CD8-positive, alpha-beta T cell (primary cell): ENCODE measurements at regions of chr12 and their contacts with region 1.

Region 1: DNA sequence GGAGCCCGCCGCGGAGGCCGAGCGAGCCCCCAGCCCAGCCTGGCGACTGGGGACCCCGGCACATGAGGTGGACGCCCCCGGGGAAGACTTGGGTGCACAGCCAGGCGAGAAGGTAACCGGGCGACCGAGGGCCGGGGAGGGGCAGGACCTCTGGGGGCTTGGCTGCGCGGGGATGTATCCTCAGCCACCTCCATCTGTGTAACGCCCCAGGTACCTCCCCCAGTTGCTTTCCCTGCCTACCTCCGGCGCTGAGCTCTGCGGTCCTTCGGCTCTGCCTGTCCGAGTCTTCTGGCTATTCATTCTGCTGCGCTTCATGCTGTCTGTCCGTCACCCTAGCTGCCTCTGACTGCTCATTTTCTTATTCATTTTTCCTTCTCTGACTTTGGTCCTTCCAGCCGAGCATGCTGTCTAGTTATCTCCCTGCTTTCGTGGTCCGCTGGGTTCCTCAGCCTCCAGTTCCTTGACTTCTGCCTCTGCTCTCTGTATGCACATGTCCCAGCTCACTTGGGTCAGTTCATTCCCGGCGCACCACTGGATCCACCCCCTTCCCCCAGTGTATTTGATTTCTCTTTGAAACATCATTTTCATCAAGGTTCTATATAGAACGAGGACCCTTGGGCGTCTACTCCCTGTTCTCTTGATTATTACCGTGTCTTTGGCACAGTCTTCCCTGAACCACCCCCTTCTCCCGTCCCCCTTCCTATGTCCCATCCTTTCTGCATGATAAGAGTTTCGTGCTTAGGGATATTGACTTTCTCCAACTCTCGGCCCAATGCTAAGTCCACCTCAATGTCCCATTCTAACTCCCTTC is 612 bp downstream of the PHC1 start:
- DNase-seq: peak; percentile 26 to 81 (median 60)
- ATAC-seq: peak; percentile 81
- H3K4me3 ChIP-seq: peak overlapping the region; percentile 79 to 82
- H3K4me3 Mint-ChIP-seq: no peak overlapping the region
- H3K27ac ChIP-seq: peak overlapping the region; percentile 44 to 61
- H3K27ac Mint-ChIP-seq: no peak overlapping the region
- H3K4me1 ChIP-seq: peaks cover 23% of the 10 kb centered on the region
- H3K4me1 Mint-ChIP-seq: peaks cover 13% of the 10 kb centered on the region
- H3K27me3 ChIP-seq: no peaks in the 10 kb centered on the region
- H3K27me3 Mint-ChIP-seq: no peaks in the 10 kb centered on the region
- CTCF ChIP-seq: no peak

Region 2: GRCh38 chr12:8629486-8630033 is 285.4 kb before region 1 on chr12:
- CTCF ChIA-PET with region 1: no interaction called
- POLR2A ChIA-PET with region 1: no interaction called
- intact Hi-C with region 1: no loop called
- DNase-seq: peak in 1 of 9 experiments; percentile 7
- ATAC-seq: no peak
- H3K4me3 ChIP-seq: no peak overlapping the region
- H3K4me3 Mint-ChIP-seq: no peak overlapping the region
- H3K27ac ChIP-seq: no peak overlapping the region
- H3K27ac Mint-ChIP-seq: no peak overlapping the region
- H3K4me1 ChIP-seq: no peaks in the 10 kb centered on the region
- H3K4me1 Mint-ChIP-seq: no peaks in the 10 kb centered on the region
- H3K27me3 ChIP-seq: no peaks in the 10 kb centered on the region
- H3K27me3 Mint-ChIP-seq: no peaks in the 10 kb centered on the region
- CTCF ChIP-seq: no peak

Region 3: GRCh38 chr12:8697476-8698131 is 217.3 kb before region 1 on chr12 and contains the start of gene RIMKLB:
- CTCF ChIA-PET with region 1: no interaction called
- POLR2A ChIA-PET with region 1: interaction called, 3 read pairs
- intact Hi-C with region 1: loop called (anchors 1 kb)
- DNase-seq: peak; percentile 55 to 91 (median 79)
- ATAC-seq: peak; percentile 85
- H3K4me3 ChIP-seq: peak within 1 kb of the TSS; percentile 80 to 95
- H3K4me3 Mint-ChIP-seq: peak within 1 kb of the TSS; percentile 96
- H3K27ac ChIP-seq: peak within 1 kb of the TSS; percentile 68 to 69
- H3K27ac Mint-ChIP-seq: peak within 1 kb of the TSS; percentile 91
- H3K4me1 ChIP-seq: peaks cover 17% of the 10 kb centered on the region
- H3K4me1 Mint-ChIP-seq: peaks cover 32% of the 10 kb centered on the region
- H3K27me3 ChIP-seq: no peaks in the 10 kb centered on the region
- H3K27me3 Mint-ChIP-seq: no peaks in the 10 kb centered on the region
- CTCF ChIP-seq: no peak
- total RNA-seq, gene RIMKLB: 10.1 to 12.2 TPM

Region 4: DNA sequence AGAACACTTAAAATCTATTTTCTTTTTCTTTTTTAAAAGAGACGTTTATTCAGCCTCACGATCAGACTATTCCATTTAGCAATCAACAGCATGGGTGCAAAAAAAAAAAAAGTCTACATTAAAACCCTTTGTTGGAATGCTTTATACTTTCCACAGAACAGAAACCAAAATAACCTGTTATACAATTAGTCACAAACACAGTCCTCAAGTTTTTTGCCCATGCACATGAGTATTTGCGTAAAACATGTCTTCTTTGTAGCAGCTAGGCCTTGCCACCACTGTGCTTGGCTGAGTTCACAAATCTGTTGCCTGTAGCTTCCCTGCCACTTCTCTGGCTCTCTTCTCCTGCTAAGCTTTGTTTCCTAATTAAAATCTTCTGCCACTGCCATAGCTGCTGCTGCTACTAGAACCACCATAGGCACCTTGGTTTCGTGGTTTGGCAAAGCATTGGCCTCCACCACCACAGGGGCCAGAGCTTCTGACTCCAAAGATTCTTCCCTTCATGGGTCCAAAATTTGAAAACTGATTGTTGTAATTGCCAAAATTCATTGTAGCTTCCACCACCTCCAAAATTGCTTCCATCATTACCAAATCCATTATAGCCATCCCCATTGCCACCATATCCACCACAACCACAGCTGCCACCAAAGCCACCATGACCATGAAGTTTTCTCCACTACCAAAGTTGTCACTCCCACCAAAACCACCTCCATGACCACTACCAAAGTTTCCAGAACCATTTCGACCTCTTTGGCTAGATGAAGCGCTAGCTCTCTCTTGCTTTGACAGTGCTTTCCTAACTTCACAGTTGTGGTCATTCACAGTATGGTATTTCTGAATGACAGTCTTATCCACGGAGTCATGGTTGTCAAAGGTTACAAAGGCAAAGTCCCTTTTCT is 112.5 kb after region 1 on chr12:
- CTCF ChIA-PET with region 1: no interaction called
- POLR2A ChIA-PET with region 1: no interaction called
- intact Hi-C with region 1: no loop called
- DNase-seq: peak in 4 of 9 experiments; percentile 20 to 59 (median 28)
- ATAC-seq: no peak
- H3K4me3 ChIP-seq: no peak overlapping the region
- H3K4me3 Mint-ChIP-seq: peak overlapping the region; percentile 38
- H3K27ac ChIP-seq: peak overlapping the region in 1 of 2 experiments; percentile 86
- H3K27ac Mint-ChIP-seq: peak overlapping the region; percentile 95
- H3K4me1 ChIP-seq: peaks cover 79% of the 10 kb centered on the region
- H3K4me1 Mint-ChIP-seq: peaks cover 50% of the 10 kb centered on the region
- H3K27me3 ChIP-seq: no peaks in the 10 kb centered on the region
- H3K27me3 Mint-ChIP-seq: no peaks in the 10 kb centered on the region
- CTCF ChIP-seq: no peak